Heart left ventricle (tissue), 16 donors: ENCODE measurements at regions of chr1 and their contacts with region 1.

Region 1: DNA sequence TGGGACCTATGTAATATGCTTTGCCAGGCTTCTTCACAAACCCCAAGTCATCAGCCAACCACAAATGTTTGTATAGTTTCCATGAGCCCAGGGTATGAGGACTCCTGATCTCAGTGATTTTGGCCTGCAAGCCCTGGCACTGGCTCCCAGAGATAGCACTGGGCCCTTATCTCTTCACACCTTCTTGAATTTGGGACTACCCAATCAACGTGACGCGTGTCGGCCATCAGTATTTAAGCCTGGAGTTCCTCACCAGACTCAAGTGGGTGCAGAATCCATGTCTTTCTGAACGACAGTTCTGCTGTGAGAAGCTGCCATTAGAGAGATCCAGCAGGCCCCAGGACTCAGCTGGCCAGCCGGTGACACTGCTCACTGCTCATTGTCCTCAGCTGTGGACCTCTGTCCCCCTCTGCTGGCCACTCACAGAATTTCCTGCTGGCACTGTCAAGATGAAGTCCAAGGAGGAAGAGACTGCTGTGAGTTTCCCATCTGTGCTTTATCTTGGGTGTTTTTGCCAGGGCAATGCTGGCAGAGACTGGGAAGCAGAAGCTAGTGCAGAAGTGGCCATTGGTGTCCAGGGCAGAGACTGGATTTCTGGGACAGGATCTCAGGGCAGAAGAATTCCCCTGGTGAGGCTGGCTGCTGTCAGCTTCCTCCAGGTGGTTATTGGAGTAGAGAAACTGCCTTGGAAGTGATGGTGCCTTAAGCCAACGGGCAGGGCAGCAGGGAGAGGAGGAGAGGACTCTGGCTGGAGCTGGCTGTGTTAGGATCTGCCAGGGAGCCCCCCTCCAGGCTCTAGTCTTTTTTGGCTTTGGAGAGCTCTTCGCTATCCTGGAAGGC is 28.4 kb downstream of the TMCC2 start:
- DNase-seq: peak; percentile 88 to 92 (median 91)
- ATAC-seq: peak; percentile 91 to 93 (median 92)
- H3K4me3 ChIP-seq: no peak overlapping the region
- H3K27ac ChIP-seq: peak overlapping the region in 6 of 12 donors; percentile 6 to 43 (median 35)
- H3K4me1 ChIP-seq: peaks cover 2 to 54% (median 35%) of the 10 kb centered on the region in 12 donors
- H3K27me3 ChIP-seq: no peaks in the 10 kb centered on the region
- CTCF ChIP-seq: peak; percentile 92 to 99 (median 96)
- POLR2A ChIP-seq: no peak

Region 2: GRCh38 chr1:204975570-204976235 is 280.5 kb before region 1 on chr1:
- intact Hi-C with region 1: loop called in 7 of 10 experiments (anchors 1 to 10 kb)
- DNase-seq: peak in 3 of 5 donors; percentile 35 to 45 (median 45)
- ATAC-seq: peak; percentile 55 to 80 (median 71)
- H3K4me3 ChIP-seq: no peak overlapping the region
- H3K27ac ChIP-seq: no peak overlapping the region
- H3K4me1 ChIP-seq: peaks cover 0 to 22% (median 0%) of the 10 kb centered on the region in 12 donors
- H3K27me3 ChIP-seq: no peaks in the 10 kb centered on the region
- CTCF ChIP-seq: peak; percentile 70 to 83 (median 76)
- POLR2A ChIP-seq: no peak

Region 3: GRCh38 chr1:205061665-205062069 is 194.5 kb before region 1 on chr1:
- intact Hi-C with region 1: loop called in 1 of 10 experiments (anchors 5 kb)
- DNase-seq: peak in 4 of 5 donors; percentile 50 to 69 (median 64)
- ATAC-seq: peak in 3 of 4 donors; percentile 45 to 79 (median 64)
- H3K4me3 ChIP-seq: no peak overlapping the region
- H3K27ac ChIP-seq: no peak overlapping the region
- H3K4me1 ChIP-seq: peaks cover 0 to 8% (median 0%) of the 10 kb centered on the region in 12 donors
- H3K27me3 ChIP-seq: no peaks in the 10 kb centered on the region
- CTCF ChIP-seq: peak; percentile 71 to 90 (median 84)
- POLR2A ChIP-seq: no peak

Region 4: GRCh38 chr1:205141236-205142101 is 114.7 kb before region 1 on chr1:
- intact Hi-C with region 1: loop called (anchors 5 to 10 kb)
- DNase-seq: peak; percentile 53 to 80 (median 64)
- ATAC-seq: peak; percentile 72 to 85 (median 78)
- H3K4me3 ChIP-seq: peak overlapping the region in 3 of 12 donors; percentile 10 to 13 (median 13)
- H3K27ac ChIP-seq: peak overlapping the region in 1 of 12 donors; percentile 14
- H3K4me1 ChIP-seq: peaks cover 0 to 27% (median 10%) of the 10 kb centered on the region in 12 donors
- H3K27me3 ChIP-seq: no peaks in the 10 kb centered on the region
- CTCF ChIP-seq: peak; percentile 68 to 87 (median 78)
- POLR2A ChIP-seq: no peak